ENCODE measurements at regions of chr3 and their contacts with region 1.

Region 1: GRCh38 chr3:80677796-80678195 is 910.0 kb upstream of the ROBO1 start:
- DNase-seq: peak; percentile 82
- H3K4me3 ChIP-seq: no peak overlapping the region
- H3K27ac ChIP-seq: peak overlapping the region; percentile 51
- H3K4me1 ChIP-seq: no peaks in the 10 kb centered on the region
- H3K27me3 ChIP-seq: no peaks in the 10 kb centered on the region
- CTCF ChIP-seq: no peak

Region 2: GRCh38 chr3:80526153-80526552 is 151.6 kb before region 1 on chr3:
- CTCF ChIA-PET with region 1: no interaction called
- POLR2A ChIA-PET with region 1: no interaction called
- intact Hi-C with region 1: loop called (anchors 10 kb)
- DNase-seq: peak; percentile 10
- H3K4me3 ChIP-seq: no peak overlapping the region
- H3K27ac ChIP-seq: no peak overlapping the region
- H3K4me1 ChIP-seq: no peaks in the 10 kb centered on the region
- H3K27me3 ChIP-seq: no peaks in the 10 kb centered on the region
- CTCF ChIP-seq: peak; percentile 60

Region 3: DNA sequence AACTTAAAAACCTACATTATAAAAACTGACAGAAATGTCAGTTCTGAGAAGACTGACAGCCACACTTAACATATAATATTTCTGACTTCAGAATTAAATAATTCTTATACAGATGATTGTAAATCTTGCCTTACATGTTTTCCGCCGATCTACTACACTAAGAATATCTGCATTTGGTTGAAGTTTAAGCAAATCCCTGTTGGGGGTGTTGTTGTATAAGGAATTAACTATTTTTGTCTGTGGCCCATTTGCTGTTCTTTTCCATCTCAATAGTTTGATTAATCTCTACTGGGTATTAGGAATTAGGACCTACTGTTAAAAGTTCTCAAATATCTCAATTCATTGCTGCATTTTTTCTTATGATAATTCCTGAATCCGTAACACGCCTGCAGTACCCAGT is 71.7 kb before region 1 on chr3:
- CTCF ChIA-PET with region 1: no interaction called
- POLR2A ChIA-PET with region 1: no interaction called
- intact Hi-C with region 1: loop called (anchors 5 kb)
- DNase-seq: peak; percentile 0
- H3K4me3 ChIP-seq: no peak overlapping the region
- H3K27ac ChIP-seq: no peak overlapping the region
- H3K4me1 ChIP-seq: no peaks in the 10 kb centered on the region
- H3K27me3 ChIP-seq: no peaks in the 10 kb centered on the region
- CTCF ChIP-seq: 0 out of 2 replicates have a peak, but pooled peaks have one; percentile 19

Measured in A673 (cell line).